ENCODE measurements at regions of chr6 and their contacts with region 1.

Region 1: DNA sequence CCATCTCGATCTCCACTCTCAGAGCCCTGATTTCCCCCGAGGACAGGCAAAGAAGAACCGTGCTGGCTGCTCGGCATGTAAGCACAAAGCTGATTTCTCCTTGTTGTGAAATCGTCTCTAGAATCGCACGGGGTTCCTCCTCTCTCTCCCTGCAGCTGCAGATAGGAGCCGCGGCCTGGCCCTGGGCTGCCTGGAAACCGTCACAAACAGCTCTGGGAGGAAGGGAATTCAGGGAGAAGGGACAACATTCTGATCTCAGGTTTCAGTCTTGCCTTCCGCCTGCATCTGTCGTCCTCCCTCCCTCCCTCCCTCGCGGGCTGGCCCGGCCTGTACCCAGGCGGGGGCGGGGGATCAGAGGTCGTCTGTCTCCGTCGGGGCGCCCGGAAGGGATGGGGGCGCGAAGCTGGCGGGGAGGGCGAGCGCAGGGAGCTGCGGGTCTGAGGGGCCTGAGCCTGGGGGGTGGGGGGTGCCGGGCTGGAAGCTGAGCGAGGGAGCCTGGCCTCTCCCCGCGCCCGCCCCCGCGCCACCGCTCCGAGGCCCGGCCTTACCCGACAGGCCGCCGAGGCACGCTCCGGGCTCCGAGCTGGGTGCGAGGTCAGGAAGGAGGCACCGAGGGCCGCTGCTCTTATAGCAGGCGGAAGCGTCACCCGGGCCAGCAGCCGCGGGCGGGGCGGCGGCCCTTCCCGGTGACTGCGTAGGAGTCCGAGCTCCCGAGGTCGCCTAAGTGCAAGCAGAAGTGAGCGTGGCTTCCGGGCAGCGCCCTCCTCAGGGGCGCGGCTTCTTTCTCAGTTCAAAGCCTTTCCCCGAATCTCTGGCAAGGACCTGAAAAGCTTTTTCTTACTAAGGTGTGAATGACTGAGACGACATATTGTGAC is at the start of gene SERPINB1:
- DNase-seq: peak; percentile 52 to 88 (median 67)
- ATAC-seq: peak; percentile 89
- H3K4me3 ChIP-seq: peak within 1 kb of the TSS; percentile 69
- H3K4me3 Mint-ChIP-seq: peak within 1 kb of the TSS; percentile 86 to 100 (median 92)
- H3K27ac ChIP-seq: peak within 1 kb of the TSS; percentile 85
- H3K27ac Mint-ChIP-seq: peak within 1 kb of the TSS; percentile 86 to 96 (median 95)
- H3K4me1 ChIP-seq: peaks cover 16 to 29% of the 10 kb centered on the region in 2 donors
- H3K4me1 Mint-ChIP-seq: peaks cover 33 to 68% (median 60%) of the 10 kb centered on the region in 7 donors
- H3K27me3 ChIP-seq: no peaks in the 10 kb centered on the region
- H3K27me3 Mint-ChIP-seq: no peaks in the 10 kb centered on the region
- total RNA-seq, gene SERPINB1: 43.8 to 108 (median 62.5) TPM

Region 2: DNA sequence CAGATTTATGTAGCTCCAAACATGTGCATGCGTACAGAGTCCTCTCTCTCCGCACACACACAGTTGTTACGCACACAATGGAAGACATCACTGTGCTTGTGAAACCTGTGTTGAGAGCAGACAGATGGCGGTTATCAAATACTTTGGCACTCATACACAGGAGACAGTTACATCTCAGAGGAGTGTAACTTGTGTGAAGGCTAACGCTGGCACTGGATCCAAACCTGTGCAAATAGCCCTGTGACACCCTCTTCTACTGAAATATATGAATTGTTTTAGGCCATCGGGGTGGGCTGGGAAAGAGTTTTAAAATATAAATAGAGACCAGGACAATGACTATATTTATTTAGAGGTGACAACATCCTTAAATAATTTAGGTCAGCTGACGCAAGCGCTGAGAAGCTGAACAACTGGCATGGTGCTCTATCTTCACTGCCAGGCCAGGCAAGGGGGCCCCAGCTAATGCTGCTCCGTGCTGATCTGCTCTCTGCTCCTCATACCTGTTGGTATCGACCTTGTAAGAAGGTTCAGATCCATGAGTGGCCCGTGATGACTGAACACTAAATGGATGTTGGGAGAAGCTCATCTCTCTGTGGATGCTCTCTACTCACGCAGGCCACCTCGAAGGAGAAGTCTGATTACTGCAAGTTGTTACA is 1162.3 kb before region 1 on chr6:
- CTCF ChIA-PET with region 1: no interaction called
- POLR2A ChIA-PET with region 1: no interaction called
- intact Hi-C with region 1: no loop called
- DNase-seq: no peak
- ATAC-seq: no peak
- H3K4me3 ChIP-seq: no peak overlapping the region
- H3K4me3 Mint-ChIP-seq: no peak overlapping the region
- H3K27ac ChIP-seq: no peak overlapping the region
- H3K27ac Mint-ChIP-seq: no peak overlapping the region
- H3K4me1 ChIP-seq: no peaks in the 10 kb centered on the region
- H3K4me1 Mint-ChIP-seq: peaks cover 0 to 1% (median 0%) of the 10 kb centered on the region in 7 donors
- H3K27me3 ChIP-seq: no peaks in the 10 kb centered on the region
- H3K27me3 Mint-ChIP-seq: no peaks in the 10 kb centered on the region

Region 3: GRCh38 chr6:2791124-2791974 is 50.2 kb before region 1 on chr6:
- CTCF ChIA-PET with region 1: interaction called, 23 read pairs
- POLR2A ChIA-PET with region 1: interaction called, 12 read pairs
- intact Hi-C with region 1: loop called (anchors 1 kb)
- DNase-seq: peak in 8 of 9 donors; percentile 10 to 61 (median 53)
- ATAC-seq: peak; percentile 73
- H3K4me3 ChIP-seq: no peak overlapping the region
- H3K4me3 Mint-ChIP-seq: peak overlapping the region in 8 of 10 donors; percentile 12 to 71 (median 56)
- H3K27ac ChIP-seq: no peak overlapping the region
- H3K27ac Mint-ChIP-seq: peak overlapping the region; percentile 29 to 90 (median 81)
- H3K4me1 ChIP-seq: peaks cover 15 to 19% of the 10 kb centered on the region in 2 donors
- H3K4me1 Mint-ChIP-seq: peaks cover 29 to 44% (median 36%) of the 10 kb centered on the region in 7 donors
- H3K27me3 ChIP-seq: no peaks in the 10 kb centered on the region
- H3K27me3 Mint-ChIP-seq: no peaks in the 10 kb centered on the region

Region 4: DNA sequence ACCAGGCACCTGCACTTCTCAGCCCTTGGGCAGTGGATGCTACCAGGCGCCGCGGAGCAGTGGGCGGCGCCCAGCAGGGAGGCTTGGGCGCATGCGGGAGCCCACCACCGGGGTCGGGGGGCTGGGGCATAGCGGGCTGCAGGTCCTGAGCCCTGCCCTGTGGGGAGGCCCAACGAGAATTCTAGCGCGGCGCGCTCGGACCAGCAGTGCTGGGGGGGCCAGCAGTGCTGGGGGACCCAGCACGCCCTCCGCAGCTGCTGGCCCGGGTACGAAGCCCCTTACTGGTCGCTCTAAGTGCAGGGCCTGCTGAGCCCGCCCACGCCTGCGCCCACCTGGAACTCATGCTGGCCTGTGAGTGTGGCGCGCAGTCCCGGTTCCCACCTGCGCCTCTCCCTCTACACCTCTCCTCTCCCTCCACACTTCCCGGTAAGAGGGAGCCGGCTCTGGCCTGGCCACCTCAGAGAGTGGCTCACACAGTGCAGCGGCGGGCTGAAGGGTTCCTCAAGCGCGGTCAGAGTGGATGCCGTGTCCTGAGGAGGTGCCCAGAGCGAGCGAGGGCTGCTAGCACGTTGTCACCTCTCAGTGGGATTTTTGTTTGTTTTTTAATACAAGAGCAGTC is 28.7 kb after region 1 on chr6:
- CTCF ChIA-PET with region 1: interaction called, 57 read pairs
- POLR2A ChIA-PET with region 1: interaction called, 14 read pairs
- intact Hi-C with region 1: no loop called
- DNase-seq: no peak
- ATAC-seq: no peak
- H3K4me3 ChIP-seq: no peak overlapping the region
- H3K4me3 Mint-ChIP-seq: no peak overlapping the region
- H3K27ac ChIP-seq: no peak overlapping the region
- H3K27ac Mint-ChIP-seq: no peak overlapping the region
- H3K4me1 ChIP-seq: peaks cover 7 to 11% of the 10 kb centered on the region in 2 donors
- H3K4me1 Mint-ChIP-seq: peaks cover 16 to 60% (median 47%) of the 10 kb centered on the region in 7 donors
- H3K27me3 ChIP-seq: no peaks in the 10 kb centered on the region
- H3K27me3 Mint-ChIP-seq: no peaks in the 10 kb centered on the region

Region 5: DNA sequence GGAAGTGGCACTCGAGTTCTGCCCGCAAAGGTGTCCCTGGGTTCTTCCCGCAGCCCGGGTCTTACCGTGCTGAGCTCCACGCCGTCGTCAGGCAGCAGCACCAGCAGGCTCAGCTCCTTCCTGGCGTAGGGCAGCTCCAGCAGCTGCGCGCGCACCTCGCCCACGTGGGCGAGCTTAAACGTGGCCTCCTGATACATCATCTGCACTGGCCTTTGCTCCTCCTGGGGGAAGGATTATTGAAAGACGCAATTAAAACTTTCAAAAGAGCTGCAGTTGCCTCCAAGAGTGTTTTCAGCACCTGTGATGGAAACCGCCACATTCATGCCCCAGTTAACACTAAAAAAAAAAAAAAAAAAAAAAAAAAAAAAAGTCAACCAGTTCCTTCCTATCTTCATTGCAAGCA is 50.3 kb after region 1 on chr6:
- CTCF ChIA-PET with region 1: interaction called, 40 read pairs
- POLR2A ChIA-PET with region 1: interaction called, 18 read pairs
- intact Hi-C with region 1: loop called in 1 of 2 experiments (anchors 1 kb)
- DNase-seq: peak in 8 of 9 donors; percentile 31 to 93 (median 79)
- ATAC-seq: peak; percentile 88
- H3K4me3 ChIP-seq: peak overlapping the region; percentile 34
- H3K4me3 Mint-ChIP-seq: peak overlapping the region; percentile 58 to 81 (median 69)
- H3K27ac ChIP-seq: peak overlapping the region; percentile 69
- H3K27ac Mint-ChIP-seq: peak overlapping the region; percentile 13 to 96 (median 90)
- H3K4me1 ChIP-seq: peaks cover 0 to 18% of the 10 kb centered on the region in 2 donors
- H3K4me1 Mint-ChIP-seq: peaks cover 22 to 80% (median 68%) of the 10 kb centered on the region in 7 donors
- H3K27me3 ChIP-seq: no peaks in the 10 kb centered on the region
- H3K27me3 Mint-ChIP-seq: no peaks in the 10 kb centered on the region

Region 6: DNA sequence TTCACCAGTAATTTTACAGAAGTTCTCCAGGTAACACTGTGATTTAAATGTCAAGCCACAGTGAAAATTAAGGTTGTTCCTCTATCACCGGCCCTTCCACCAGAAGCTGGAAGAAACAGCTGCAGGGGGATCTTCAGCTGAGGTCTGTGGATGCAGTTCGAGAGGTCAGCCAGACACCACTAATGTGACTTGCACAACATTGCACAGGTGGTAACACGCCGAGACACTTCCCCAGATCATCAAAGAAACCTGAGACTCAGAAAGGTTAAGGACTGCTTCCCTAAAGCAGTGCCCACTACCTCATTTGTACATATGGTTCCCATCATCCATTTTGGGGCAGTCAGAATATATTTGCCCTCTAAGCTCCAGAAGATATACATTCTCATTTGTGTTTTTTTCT is 69.7 kb after region 1 on chr6:
- CTCF ChIA-PET with region 1: interaction called, 77 read pairs
- POLR2A ChIA-PET with region 1: interaction called, 71 read pairs
- intact Hi-C with region 1: loop called (anchors 1 kb)
- DNase-seq: no peak
- ATAC-seq: peak; percentile 35
- H3K4me3 ChIP-seq: no peak overlapping the region
- H3K4me3 Mint-ChIP-seq: no peak overlapping the region
- H3K27ac ChIP-seq: no peak overlapping the region
- H3K27ac Mint-ChIP-seq: peak overlapping the region in 2 of 9 donors; percentile 40 to 54
- H3K4me1 ChIP-seq: peaks cover 0 to 7% of the 10 kb centered on the region in 2 donors
- H3K4me1 Mint-ChIP-seq: peaks cover 26 to 53% (median 40%) of the 10 kb centered on the region in 7 donors
- H3K27me3 ChIP-seq: no peaks in the 10 kb centered on the region
- H3K27me3 Mint-ChIP-seq: peaks cover 0 to 1% (median 0%) of the 10 kb centered on the region in 5 donors

Region 7: GRCh38 chr6:2940010-2940850 is 98.7 kb after region 1 on chr6:
- CTCF ChIA-PET with region 1: interaction called, 35 read pairs
- POLR2A ChIA-PET with region 1: interaction called, 90 read pairs
- intact Hi-C with region 1: loop called in 1 of 2 experiments (anchors 2 kb)
- DNase-seq: peak in 8 of 9 donors; percentile 70 to 90 (median 82)
- ATAC-seq: peak; percentile 81
- H3K4me3 ChIP-seq: peak overlapping the region; percentile 72
- H3K4me3 Mint-ChIP-seq: peak overlapping the region; percentile 81 to 94 (median 88)
- H3K27ac ChIP-seq: peak overlapping the region; percentile 81
- H3K27ac Mint-ChIP-seq: peak overlapping the region; percentile 93 to 100 (median 97)
- H3K4me1 ChIP-seq: peaks cover 27 to 76% of the 10 kb centered on the region in 2 donors
- H3K4me1 Mint-ChIP-seq: peaks cover 33 to 88% (median 79%) of the 10 kb centered on the region in 7 donors
- H3K27me3 ChIP-seq: no peaks in the 10 kb centered on the region
- H3K27me3 Mint-ChIP-seq: peaks cover 0 to 22% (median 0%) of the 10 kb centered on the region in 5 donors